B cell (primary cell): ENCODE measurements at regions of chr2 and their contacts with region 1.

Region 1: DNA sequence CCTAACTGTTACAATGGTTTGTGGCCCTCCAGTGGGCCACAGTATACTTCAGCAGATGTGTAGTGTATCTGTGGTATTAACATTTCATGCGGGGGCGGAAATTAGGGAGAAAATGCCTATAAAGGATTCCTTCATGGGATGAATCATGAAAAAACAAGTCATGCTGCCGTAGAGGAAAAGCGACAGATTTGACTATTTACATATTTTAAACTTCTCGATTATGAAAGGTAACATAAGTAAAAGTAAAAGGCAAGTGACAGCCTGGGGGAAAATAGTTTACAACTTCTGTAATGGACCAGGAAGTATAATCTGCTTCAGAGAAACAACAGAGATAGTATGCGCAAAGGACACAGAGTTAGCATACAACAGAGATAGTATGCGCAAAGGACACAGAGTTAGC is 41.1 kb downstream of the MRPS9 start:
- DNase-seq: no peak
- ATAC-seq: no peak
- H3K4me3 ChIP-seq: no peak overlapping the region
- H3K4me3 Mint-ChIP-seq: no peak overlapping the region
- H3K27ac ChIP-seq: no peak overlapping the region
- H3K27ac Mint-ChIP-seq: no peak overlapping the region
- H3K4me1 ChIP-seq: no peaks in the 10 kb centered on the region
- H3K4me1 Mint-ChIP-seq: no peaks in the 10 kb centered on the region
- H3K27me3 ChIP-seq: no peaks in the 10 kb centered on the region
- H3K27me3 Mint-ChIP-seq: no peaks in the 10 kb centered on the region
- CTCF ChIP-seq: no peak

Region 2: GRCh38 chr2:104465981-104466380 is 613.0 kb before region 1 on chr2:
- CTCF ChIA-PET with region 1: no interaction called
- POLR2A ChIA-PET with region 1: no interaction called
- intact Hi-C with region 1: loop called (anchors 5 kb)
- DNase-seq: no peak
- ATAC-seq: no peak
- H3K4me3 ChIP-seq: no peak overlapping the region
- H3K4me3 Mint-ChIP-seq: no peak overlapping the region
- H3K27ac ChIP-seq: no peak overlapping the region
- H3K27ac Mint-ChIP-seq: no peak overlapping the region
- H3K4me1 ChIP-seq: no peaks in the 10 kb centered on the region
- H3K4me1 Mint-ChIP-seq: no peaks in the 10 kb centered on the region
- H3K27me3 ChIP-seq: no peaks in the 10 kb centered on the region
- H3K27me3 Mint-ChIP-seq: peaks cover 7% of the 10 kb centered on the region
- CTCF ChIP-seq: no peak